BJ (cell line): ENCODE measurements at regions of chr4 and their contacts with region 1.

Region 1: GRCh38 chr4:87235020-87235671 is 14.7 kb upstream of the KLHL8 start:
- DNase-seq: no peak
- H3K4me3 ChIP-seq: no peak overlapping the region; the same call in 1 of the 2 replicates
- H3K27me3 ChIP-seq: no peaks in the 10 kb centered on the region; the same call in 1 of the 2 replicates
- CTCF ChIP-seq: no peak

Region 2: GRCh38 chr4:87220094-87220822 is 14.9 kb before region 1 on chr4 and contains the start of gene KLHL8:
- CTCF ChIA-PET with region 1: interaction called, 15 read pairs
- POLR2A ChIA-PET with region 1: no interaction called
- DNase-seq: no peak
- H3K4me3 ChIP-seq: peak within 1 kb of the TSS; percentile 97
- H3K27me3 ChIP-seq: no peaks in the 10 kb centered on the region
- CTCF ChIP-seq: peak; percentile 9; the same call in 1 of the 2 replicates
- polyA plus RNA-seq, gene KLHL8: 1.7 and 4.3 TPM in 2 replicates